ENCODE measurements at regions of chr20 and their contacts with region 1.

Region 1: DNA sequence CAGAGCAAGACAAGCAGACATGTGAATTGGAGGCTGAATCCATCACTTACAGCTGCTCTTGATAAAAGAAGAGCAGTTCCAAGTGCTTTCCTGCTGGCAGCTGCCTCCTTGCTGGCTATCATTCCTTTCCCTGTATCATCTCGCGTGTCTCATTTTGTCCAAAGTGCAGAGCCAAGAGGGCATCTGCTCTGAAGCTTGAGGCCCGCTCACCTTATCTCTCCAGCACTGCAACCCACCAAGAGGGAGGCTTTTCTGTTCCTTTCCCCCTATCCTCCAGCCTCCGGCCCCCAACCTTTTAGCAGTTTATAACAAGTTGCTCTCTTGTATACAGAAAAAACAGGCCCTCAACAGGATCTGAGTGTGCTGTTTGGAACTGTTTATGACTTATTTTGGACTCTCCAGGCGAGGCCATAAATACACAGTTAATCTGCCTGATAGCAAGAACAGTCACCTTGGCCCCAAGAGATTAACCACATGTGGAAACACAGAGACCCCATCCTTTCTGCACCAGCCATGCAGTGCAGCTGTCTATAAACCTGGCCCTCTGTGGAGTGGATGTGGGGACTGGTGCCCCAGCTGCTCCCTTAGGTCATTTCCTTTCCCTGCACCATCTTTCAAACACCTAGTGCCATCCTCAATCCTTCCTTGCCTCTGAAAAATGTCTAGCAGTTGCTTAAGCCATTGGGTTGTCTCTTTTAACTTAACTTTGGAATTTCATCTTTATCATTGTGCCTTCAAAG is 172.5 kb upstream of the FERMT1 start:
- DNase-seq: no peak
- ATAC-seq: no peak
- H3K4me3 ChIP-seq: no peak overlapping the region
- H3K27ac ChIP-seq: no peak overlapping the region
- H3K4me1 ChIP-seq: no peaks in the 10 kb centered on the region
- H3K27me3 ChIP-seq: no peaks in the 10 kb centered on the region
- CTCF ChIP-seq: no peak
- POLR2A ChIP-seq: no peak
- RAD21 ChIP-seq: no peak

Region 2: DNA sequence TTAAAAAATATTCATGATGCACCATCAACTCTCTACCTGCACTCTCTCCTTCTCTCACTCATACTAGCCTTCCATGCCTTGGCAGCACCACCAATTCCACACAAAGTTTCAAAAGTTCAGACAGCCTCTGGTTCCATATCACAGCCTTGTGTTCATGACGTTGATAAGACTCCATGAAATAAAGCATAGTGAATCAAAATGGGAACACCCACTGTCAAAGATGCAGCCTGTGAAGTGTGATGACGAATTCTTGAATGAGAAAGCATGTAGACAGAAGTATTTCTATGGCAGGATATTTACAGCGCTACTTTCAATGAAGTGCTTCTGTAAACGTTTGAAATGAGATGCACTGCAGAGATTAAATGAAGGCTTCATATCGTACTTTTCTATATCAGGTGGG is 95.2 kb before region 1 on chr20:
- CTCF ChIA-PET with region 1: no interaction called
- POLR2A ChIA-PET with region 1: no interaction called
- dilution Hi-C with region 1: no loop called
- in situ Hi-C with region 1: no loop called
- intact Hi-C with region 1: no loop called
- DNase-seq: no peak
- ATAC-seq: no peak
- H3K4me3 ChIP-seq: no peak overlapping the region
- H3K27ac ChIP-seq: no peak overlapping the region
- H3K4me1 ChIP-seq: no peaks in the 10 kb centered on the region
- H3K27me3 ChIP-seq: no peaks in the 10 kb centered on the region
- CTCF ChIP-seq: no peak
- POLR2A ChIP-seq: no peak
- RAD21 ChIP-seq: no peak

Region 3: DNA sequence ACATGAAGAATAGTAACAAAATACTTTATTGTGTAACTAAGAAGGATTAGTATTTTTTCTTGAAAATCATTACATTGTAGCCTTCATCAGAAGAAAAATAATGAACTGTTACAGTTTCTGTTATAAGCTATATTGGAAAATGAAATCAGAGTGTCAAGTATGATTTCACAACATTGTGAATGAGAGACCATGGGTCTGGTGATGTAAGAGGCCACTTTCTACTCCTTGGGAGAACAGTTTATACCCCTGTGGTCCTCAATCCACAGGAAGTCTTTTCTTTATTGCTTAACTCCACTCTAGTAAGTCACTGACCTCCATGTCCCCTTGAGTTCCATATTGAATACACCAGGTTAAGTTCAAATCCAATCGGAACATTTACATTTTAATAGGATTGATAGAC is 46.2 kb after region 1 on chr20:
- CTCF ChIA-PET with region 1: no interaction called
- POLR2A ChIA-PET with region 1: no interaction called
- dilution Hi-C with region 1: no loop called
- in situ Hi-C with region 1: loop called (anchors 5 kb)
- intact Hi-C with region 1: no loop called
- DNase-seq: no peak
- ATAC-seq: no peak
- H3K4me3 ChIP-seq: no peak overlapping the region
- H3K27ac ChIP-seq: no peak overlapping the region
- H3K4me1 ChIP-seq: no peaks in the 10 kb centered on the region
- H3K27me3 ChIP-seq: no peaks in the 10 kb centered on the region
- CTCF ChIP-seq: no peak
- POLR2A ChIP-seq: no peak
- RAD21 ChIP-seq: no peak

Region 4: GRCh38 chr20:7346562-7346961 is 1051.3 kb after region 1 on chr20:
- CTCF ChIA-PET with region 1: no interaction called
- POLR2A ChIA-PET with region 1: no interaction called
- dilution Hi-C with region 1: no loop called
- in situ Hi-C with region 1: no loop called
- intact Hi-C with region 1: no loop called
- DNase-seq: no peak
- ATAC-seq: no peak
- H3K4me3 ChIP-seq: no peak overlapping the region
- H3K27ac ChIP-seq: no peak overlapping the region
- H3K4me1 ChIP-seq: no peaks in the 10 kb centered on the region
- H3K27me3 ChIP-seq: no peaks in the 10 kb centered on the region
- CTCF ChIP-seq: no peak
- POLR2A ChIP-seq: no peak
- RAD21 ChIP-seq: no peak